Ascending aorta (tissue), 2 donors: ENCODE measurements at regions of chr18 and their contacts with region 1.

Region 1: GRCh38 chr18:36628435-36629137 is 200.2 kb downstream of the TPGS2 start:
- DNase-seq: no peak
- H3K4me3 ChIP-seq: peak overlapping the region in 1 of 2 donors; percentile 29
- H3K27ac ChIP-seq: peak overlapping the region; percentile 67 to 88
- H3K4me1 ChIP-seq: peaks cover 0 to 22% of the 10 kb centered on the region in 2 donors
- H3K27me3 ChIP-seq: no peaks in the 10 kb centered on the region
- CTCF ChIP-seq: no peak

Region 2: GRCh38 chr18:36580266-36580665 is 48.3 kb before region 1 on chr18:
- intact Hi-C with region 1: loop called (anchors 5 kb)
- DNase-seq: peak in 1 of 2 donors; percentile 77
- H3K4me3 ChIP-seq: no peak overlapping the region
- H3K27ac ChIP-seq: peak overlapping the region; percentile 85 to 91
- H3K4me1 ChIP-seq: peaks cover 0 to 21% of the 10 kb centered on the region in 2 donors
- H3K27me3 ChIP-seq: no peaks in the 10 kb centered on the region
- CTCF ChIP-seq: peak in 1 of 3 experiments; percentile 20

Region 3: GRCh38 chr18:36653870-36654269 is 25.3 kb after region 1 on chr18:
- intact Hi-C with region 1: loop called (anchors 1 kb)
- DNase-seq: no peak
- H3K4me3 ChIP-seq: no peak overlapping the region
- H3K27ac ChIP-seq: peak overlapping the region in 1 of 2 donors; percentile 91
- H3K4me1 ChIP-seq: peaks cover 0 to 16% of the 10 kb centered on the region in 2 donors
- H3K27me3 ChIP-seq: no peaks in the 10 kb centered on the region
- CTCF ChIP-seq: no peak

Region 4: DNA sequence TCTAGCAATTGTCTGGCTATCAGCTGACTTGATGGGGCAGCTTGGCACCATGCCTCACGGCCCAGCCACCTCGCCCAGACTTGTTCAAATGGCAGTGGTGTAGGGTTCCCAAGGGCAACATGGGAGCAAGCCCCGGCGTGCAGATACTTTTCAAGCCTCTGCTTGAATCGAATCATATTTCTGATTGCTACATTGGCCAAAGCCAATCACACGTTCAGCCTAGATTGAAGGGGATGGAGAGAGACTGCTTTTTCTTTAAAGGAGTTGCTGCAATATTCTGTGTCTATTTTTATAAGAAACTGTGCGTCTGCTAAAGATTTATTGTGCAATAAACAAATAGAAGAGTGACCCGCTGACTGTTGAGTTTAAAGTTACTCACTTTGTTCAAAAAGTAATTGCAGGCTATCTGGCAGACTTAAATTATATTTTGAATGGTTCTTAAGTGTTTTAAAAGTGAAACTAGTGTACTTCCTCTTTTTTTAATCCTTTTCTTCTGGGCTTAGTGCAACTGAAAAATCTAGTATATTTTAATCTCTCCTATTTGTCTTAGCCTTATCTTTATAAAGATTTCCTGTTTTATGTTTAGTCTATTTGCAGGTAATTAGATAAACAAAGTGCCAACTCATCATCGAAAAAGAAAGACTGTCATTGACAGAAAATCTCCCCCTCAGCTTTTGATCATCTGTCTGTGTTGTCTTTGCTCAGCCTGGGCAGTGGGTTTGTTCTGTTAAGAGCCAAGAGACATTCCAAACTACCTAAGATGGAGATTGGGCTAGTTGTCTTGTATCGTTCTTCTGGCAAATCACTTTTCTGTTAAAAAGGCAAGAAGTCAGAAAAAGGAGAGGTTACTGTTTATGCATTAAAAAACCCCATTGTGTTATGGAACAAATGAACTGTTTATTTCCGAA is 44.1 kb after region 1 on chr18:
- intact Hi-C with region 1: loop called (anchors 5 kb)
- DNase-seq: peak in 1 of 2 donors; percentile 67
- H3K4me3 ChIP-seq: peak overlapping the region; percentile 42 to 46
- H3K27ac ChIP-seq: peak overlapping the region; percentile 69 to 77
- H3K4me1 ChIP-seq: peaks cover 0 to 13% of the 10 kb centered on the region in 2 donors
- H3K27me3 ChIP-seq: no peaks in the 10 kb centered on the region
- CTCF ChIP-seq: no peak